ENCODE measurements at regions of chr22 and their contacts with region 1.

Region 1: GRCh38 chr22:38114484-38115398 is 4.3 kb upstream of the BAIAP2L2 start:
- H3K4me3 ChIP-seq: no peak overlapping the region
- H3K27ac ChIP-seq: no peak overlapping the region
- H3K4me1 ChIP-seq: no peaks in the 10 kb centered on the region; the same call in 1 of the 2 replicates
- CTCF ChIP-seq: peak; percentile 92

Region 2: DNA sequence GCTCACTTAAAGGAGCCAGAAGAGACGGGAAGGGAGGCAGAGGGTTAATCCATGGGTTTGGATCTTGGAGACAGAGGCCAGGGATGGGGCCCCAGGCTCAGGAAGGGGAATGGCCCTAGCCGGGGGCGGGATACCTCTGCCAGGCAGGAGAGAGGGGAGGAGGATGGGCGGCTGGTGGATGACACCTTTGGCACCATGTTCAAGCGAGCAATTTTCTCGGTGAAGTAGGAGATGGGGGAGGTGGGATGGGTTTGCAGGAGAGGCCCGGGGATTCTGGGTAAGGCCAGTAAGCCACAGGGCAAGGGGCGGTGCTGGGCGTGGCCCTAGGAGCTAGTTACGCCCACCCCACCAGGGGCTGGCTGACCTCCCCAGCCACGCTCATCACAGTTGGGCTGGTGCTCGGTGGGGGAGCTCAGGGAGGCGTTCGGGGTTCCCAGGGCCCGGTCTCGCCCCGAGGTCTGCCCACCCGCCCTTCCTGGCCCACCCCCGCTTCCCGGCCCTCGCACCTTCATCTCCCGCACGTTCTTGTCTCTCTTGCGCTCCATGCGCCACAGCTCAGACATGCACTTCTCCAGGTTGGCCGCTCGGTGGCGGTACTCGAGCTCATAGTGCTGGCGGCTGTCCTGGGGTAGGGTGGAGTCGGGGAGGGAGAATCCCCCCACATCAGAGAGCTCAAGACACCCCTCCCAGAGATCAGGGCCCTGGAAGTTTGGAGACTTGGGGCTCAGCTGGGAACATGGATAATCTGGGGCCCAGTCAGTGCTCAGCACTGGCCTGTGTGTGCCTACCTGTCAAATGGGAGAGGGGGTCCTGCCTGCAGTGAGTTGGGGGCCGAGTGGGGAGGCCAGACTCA is 17.0 kb before region 1 on chr22:
- CTCF ChIA-PET with region 1: interaction called, 25 read pairs
- POLR2A ChIA-PET with region 1: interaction called, 3 read pairs
- H3K4me3 ChIP-seq: no peak overlapping the region
- H3K27ac ChIP-seq: no peak overlapping the region
- H3K4me1 ChIP-seq: no peaks in the 10 kb centered on the region; the same call in 1 of the 2 replicates
- CTCF ChIP-seq: no peak

Region 3: GRCh38 chr22:38104084-38104483 is 10.7 kb before region 1 on chr22:
- CTCF ChIA-PET with region 1: interaction called, 25 read pairs
- POLR2A ChIA-PET with region 1: interaction called, 3 read pairs
- H3K4me3 ChIP-seq: no peak overlapping the region
- H3K27ac ChIP-seq: no peak overlapping the region
- H3K4me1 ChIP-seq: no peaks in the 10 kb centered on the region
- CTCF ChIP-seq: no peak

Region 4: GRCh38 chr22:38136584-38136983 is 21.8 kb after region 1 on chr22:
- CTCF ChIA-PET with region 1: interaction called, 17 read pairs
- POLR2A ChIA-PET with region 1: no interaction called
- H3K4me3 ChIP-seq: no peak overlapping the region
- H3K27ac ChIP-seq: no peak overlapping the region
- H3K4me1 ChIP-seq: no peaks in the 10 kb centered on the region
- CTCF ChIP-seq: no peak

Region 5: DNA sequence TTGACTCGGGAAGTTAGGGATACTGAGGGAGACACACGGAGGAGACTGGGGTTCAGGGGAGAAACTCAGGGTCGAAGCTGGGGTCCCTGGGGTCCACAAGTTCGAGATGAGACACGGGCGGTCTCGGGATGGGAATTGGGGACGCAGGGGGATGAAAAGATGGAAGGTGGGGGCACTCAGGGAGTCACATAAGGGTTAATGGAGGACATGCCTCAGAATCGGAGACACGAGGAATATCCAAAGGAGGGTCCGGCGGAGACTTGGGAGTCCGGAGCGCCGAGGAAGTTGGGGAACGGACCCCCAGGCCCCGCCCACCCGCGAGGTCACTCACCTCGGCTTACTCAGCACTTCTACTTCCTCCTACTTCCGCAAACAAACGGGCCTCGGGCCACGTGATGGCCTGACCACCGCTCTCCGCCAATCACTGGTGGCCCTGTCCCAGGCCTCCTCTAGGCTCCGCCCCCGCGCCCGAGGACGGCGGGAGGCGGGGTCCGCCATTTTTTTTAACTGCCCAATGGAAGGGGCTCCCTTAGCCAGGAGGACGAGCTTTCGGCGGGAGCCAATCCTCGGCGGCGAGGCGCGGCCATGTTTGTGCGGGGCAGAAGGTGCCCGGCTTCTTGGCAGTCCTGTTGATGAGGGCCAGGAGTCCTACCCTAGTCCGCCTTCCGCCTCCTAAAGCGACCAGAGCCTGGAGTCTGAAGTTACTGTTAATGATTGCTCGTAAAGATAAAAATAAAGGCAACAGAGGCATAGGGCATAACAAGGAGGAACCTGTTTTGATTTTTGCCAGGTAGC is 66.9 kb after region 1 on chr22 and contains the start of gene PLA2G6:
- CTCF ChIA-PET with region 1: interaction called, 19 read pairs
- POLR2A ChIA-PET with region 1: no interaction called
- H3K4me3 ChIP-seq: peak within 1 kb of the TSS; percentile 77
- H3K27ac ChIP-seq: peak within 1 kb of the TSS; percentile 82
- H3K4me1 ChIP-seq: peaks cover 13% of the 10 kb centered on the region
- CTCF ChIP-seq: no peak

Region 6: GRCh38 chr22:38230108-38230825 is 115.5 kb after region 1 on chr22:
- CTCF ChIA-PET with region 1: interaction called, 35 read pairs
- POLR2A ChIA-PET with region 1: no interaction called
- H3K4me3 ChIP-seq: no peak overlapping the region
- H3K27ac ChIP-seq: no peak overlapping the region
- H3K4me1 ChIP-seq: no peaks in the 10 kb centered on the region
- CTCF ChIP-seq: no peak